ENCODE measurements at regions of chr2 and their contacts with region 1.

Region 1: DNA sequence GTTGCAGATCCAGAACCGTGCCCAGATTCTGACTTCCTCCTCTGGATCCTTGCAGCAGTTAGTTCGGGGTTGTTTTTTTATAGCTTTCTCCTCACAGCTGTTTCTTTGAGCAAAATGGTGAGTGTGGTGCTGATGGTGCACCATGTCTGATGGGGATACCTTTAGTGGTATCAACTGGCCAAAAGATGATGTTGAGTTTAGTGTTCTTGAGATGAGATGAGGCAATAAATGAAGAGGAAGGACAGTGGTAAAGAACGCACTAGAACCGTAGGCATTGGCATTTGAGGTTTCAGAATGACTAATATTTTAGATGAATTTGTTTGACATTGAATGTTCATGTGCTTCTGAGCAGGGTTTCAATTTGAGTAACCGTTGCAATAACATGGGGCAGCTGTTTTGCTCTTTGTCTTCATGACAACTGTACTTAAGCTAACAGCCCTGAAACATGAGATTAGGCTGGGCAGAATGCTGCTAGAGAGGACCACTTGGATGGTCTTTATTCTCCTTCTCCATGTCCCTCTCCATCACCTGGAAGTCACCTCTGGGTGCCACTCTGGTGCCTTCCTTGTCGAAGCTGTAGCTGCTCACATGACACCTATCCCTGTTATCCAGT is 3.9 kb downstream of the CTLA4 start:
- DNase-seq: peak; percentile 60
- H3K4me3 Mint-ChIP-seq: peak overlapping the region; percentile 96
- H3K27ac Mint-ChIP-seq: peak overlapping the region; percentile 95
- H3K4me1 Mint-ChIP-seq: peaks cover 57% of the 10 kb centered on the region
- H3K27me3 Mint-ChIP-seq: no peaks in the 10 kb centered on the region

Region 2: DNA sequence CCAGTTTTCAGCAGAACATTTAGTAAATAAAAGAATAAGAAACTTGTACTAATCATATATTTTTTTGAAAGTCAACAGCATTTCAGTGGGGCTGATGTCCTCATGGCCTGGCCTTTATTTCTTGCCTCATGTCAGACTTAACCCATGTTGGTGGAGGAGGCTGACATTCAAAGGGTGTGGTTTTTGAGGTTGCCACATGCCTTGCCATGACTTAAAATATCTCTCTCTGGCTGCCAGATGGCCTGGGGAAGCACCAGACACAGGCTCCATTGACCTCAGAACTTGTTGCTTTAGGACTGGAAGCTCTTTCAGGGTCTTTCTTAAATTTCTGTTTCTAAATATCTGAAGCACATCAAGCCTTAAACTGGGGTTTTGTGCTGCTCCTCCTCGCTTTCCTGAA is 197.5 kb before region 1 on chr2:
- intact Hi-C with region 1: no loop called
- DNase-seq: peak; percentile 46
- H3K4me3 Mint-ChIP-seq: peak overlapping the region; percentile 51
- H3K27ac Mint-ChIP-seq: peak overlapping the region; percentile 85
- H3K4me1 Mint-ChIP-seq: peaks cover 47% of the 10 kb centered on the region
- H3K27me3 Mint-ChIP-seq: no peaks in the 10 kb centered on the region

Region 3: GRCh38 chr2:203887677-203888076 is 16.2 kb after region 1 on chr2:
- intact Hi-C with region 1: loop called (anchors 1 kb)
- DNase-seq: no peak
- H3K4me3 Mint-ChIP-seq: no peak overlapping the region
- H3K27ac Mint-ChIP-seq: peak overlapping the region; percentile 54
- H3K4me1 Mint-ChIP-seq: peaks cover 67% of the 10 kb centered on the region
- H3K27me3 Mint-ChIP-seq: no peaks in the 10 kb centered on the region

Region 4: GRCh38 chr2:203893401-203893800 is 21.9 kb after region 1 on chr2:
- intact Hi-C with region 1: loop called (anchors 1 kb)
- DNase-seq: no peak
- H3K4me3 Mint-ChIP-seq: no peak overlapping the region
- H3K27ac Mint-ChIP-seq: peak overlapping the region; percentile 92
- H3K4me1 Mint-ChIP-seq: peaks cover 79% of the 10 kb centered on the region
- H3K27me3 Mint-ChIP-seq: no peaks in the 10 kb centered on the region

Measured in activated T-helper 2 cell treated with anti-CD3 and anti-CD28 coated beads, Interferon-gamma antibody, Interleukin-2, Interleukin-4, amounts not matched to agents 10 μg/mL and 5 μg/mL and 100 μg/mL, durations not matched to agents 14 hours and 24 hours and 36 hours (primary cell).